Activated T-helper 1 cell treated with anti-CD3 and anti-CD28 coated beads, Interleukin-12 subunit alpha, Interleukin-12 subunit beta, Interleukin-2, Interleukin-4 antibody, amounts not matched to agents 30 ng/mL and 10 ng/mL and 1 ng/mL, durations not matched to agents 14 hours and 24 hours and 36 hours (primary cell): ENCODE measurements at regions of chr19 and their contacts with region 1.

Region 1: GRCh38 chr19:38544034-38544958 is 73.5 kb downstream of the MAP4K1 start:
- DNase-seq: no peak
- H3K4me3 Mint-ChIP-seq: peak overlapping the region; percentile 63
- H3K27ac Mint-ChIP-seq: peak overlapping the region; percentile 46
- H3K4me1 Mint-ChIP-seq: peaks cover 29% of the 10 kb centered on the region
- H3K27me3 Mint-ChIP-seq: no peaks in the 10 kb centered on the region

Region 2: DNA sequence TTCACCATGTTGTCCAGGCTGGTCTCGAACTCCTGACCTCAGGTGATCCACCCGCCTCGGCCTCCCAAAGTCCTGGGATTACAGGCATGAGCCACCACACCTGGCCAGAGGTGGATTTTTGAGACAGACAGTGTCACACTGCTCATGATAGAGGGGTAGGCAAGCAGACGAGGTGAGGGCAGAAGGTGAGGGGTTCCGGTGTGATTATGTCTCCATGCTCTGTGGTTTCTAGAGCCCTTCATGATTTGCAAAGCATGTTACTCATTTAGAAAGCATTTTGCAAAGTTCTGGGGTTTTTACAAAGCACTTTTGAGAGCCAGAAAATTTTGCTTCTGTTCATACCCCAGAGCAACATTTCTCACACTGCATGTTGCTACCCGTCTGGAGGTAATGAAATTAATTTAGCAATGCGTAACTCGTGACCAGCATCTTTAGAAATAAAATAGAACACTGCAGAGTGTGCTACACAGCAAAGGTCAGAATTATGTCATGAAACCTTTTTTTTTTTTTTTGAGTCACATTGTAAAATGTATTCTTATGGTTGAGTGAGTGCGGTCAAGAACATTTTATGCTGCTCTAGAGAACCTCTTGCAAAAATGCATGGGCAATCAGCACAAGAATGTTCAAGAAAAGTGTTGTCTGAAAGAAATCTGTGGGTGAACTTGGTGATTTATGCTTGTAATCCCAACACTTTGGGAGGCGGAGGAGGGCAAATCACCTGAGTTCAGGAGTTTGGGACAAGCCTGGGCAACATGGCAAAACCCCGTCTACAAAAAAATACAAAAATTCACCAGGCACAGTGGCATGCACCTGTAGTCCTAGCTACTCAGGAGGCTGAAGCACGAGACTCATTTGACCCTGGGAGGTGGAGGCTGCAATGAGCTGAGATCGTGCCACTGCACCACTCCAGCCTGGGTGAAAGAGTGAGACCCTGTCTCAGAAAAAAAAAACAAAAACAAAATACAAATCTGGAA is 15.4 kb after region 1 on chr19:
- intact Hi-C with region 1: loop called (anchors 1 kb)
- DNase-seq: peak; percentile 47
- H3K4me3 Mint-ChIP-seq: peak overlapping the region; percentile 38
- H3K27ac Mint-ChIP-seq: peak overlapping the region; percentile 76
- H3K4me1 Mint-ChIP-seq: peaks cover 56% of the 10 kb centered on the region
- H3K27me3 Mint-ChIP-seq: peaks cover 23% of the 10 kb centered on the region

Region 3: DNA sequence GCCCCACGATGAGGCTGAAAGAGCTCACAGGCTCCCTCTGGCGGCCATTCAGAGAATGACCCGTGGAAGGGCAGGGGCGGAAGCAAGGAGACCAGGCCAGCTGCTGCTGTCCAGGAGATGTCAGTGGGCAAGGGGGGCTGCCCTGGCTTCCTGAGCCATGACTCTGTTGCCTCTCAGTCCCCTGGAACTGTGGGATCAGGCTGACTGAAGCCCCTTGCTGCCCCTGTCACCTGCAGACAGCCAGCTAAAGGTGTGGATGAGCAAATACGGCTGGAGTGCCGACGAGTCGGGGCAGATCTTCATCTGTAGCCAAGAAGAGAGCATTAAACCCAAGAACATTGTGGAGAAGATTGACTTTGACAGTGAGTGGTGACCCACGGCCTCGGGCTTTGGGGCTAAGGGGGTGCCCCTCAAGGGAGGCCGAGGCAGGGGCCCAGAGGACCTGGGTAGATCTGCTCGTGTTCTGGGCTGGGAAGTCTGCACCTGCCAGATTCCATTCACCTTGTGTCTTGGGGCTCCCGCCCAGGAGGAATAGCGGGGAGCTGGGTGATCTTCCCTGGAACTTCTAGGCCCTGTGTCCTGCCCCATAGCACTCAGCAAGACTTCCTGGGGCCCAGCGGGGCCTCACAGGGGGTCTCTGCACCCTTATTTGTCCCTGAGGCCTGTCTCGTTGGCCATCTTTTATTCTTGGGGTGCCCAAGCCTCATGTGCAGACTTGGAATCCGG is 90.6 kb after region 1 on chr19:
- intact Hi-C with region 1: loop called (anchors 1 kb)
- DNase-seq: peak; percentile 68
- H3K4me3 Mint-ChIP-seq: peak overlapping the region; percentile 43
- H3K27ac Mint-ChIP-seq: peak overlapping the region; percentile 83
- H3K4me1 Mint-ChIP-seq: peaks cover 36% of the 10 kb centered on the region
- H3K27me3 Mint-ChIP-seq: no peaks in the 10 kb centered on the region

Region 4: GRCh38 chr19:38891771-38892170 is 347.5 kb after region 1 on chr19:
- intact Hi-C with region 1: loop called (anchors 1 kb)
- DNase-seq: no peak
- H3K4me3 Mint-ChIP-seq: no peak overlapping the region
- H3K27ac Mint-ChIP-seq: no peak overlapping the region
- H3K4me1 Mint-ChIP-seq: no peaks in the 10 kb centered on the region
- H3K27me3 Mint-ChIP-seq: no peaks in the 10 kb centered on the region